Activated T-helper 1 cell treated with anti-CD3 and anti-CD28 coated beads, Interleukin-12 subunit alpha, Interleukin-12 subunit beta, Interleukin-2, Interleukin-4 antibody, amounts not matched to agents 30 ng/mL and 10 ng/mL and 1 ng/mL, durations not matched to agents 14 hours and 24 hours and 36 hours (primary cell): ENCODE measurements at regions of chr6 and their contacts with region 1.

Region 1: GRCh38 chr6:24520929-24521546 is 26.3 kb downstream of the ALDH5A1 start:
- DNase-seq: no peak
- H3K4me3 Mint-ChIP-seq: no peak overlapping the region
- H3K27ac Mint-ChIP-seq: no peak overlapping the region
- H3K4me1 Mint-ChIP-seq: peaks cover 20% of the 10 kb centered on the region
- H3K27me3 Mint-ChIP-seq: no peaks in the 10 kb centered on the region

Region 2: DNA sequence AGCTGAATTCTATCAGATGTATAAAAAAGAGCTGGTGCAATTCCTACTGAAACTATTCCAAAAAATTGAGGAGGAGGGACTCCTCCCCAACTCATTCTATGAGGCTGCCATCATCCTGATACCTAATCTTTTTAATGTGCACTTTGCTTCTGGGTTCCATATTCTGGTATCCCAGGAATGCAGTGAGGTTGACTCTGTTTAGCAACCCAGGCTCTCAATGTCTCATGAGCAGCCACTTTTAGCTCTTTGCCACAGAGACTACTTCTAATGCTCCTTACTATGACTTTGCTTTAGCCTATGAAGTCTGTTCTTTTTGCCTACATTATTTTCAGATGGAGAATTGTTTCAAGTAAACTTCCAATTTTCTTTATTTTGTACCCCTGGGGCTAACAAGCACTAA is 580.6 kb before region 1 on chr6:
- intact Hi-C with region 1: no loop called
- DNase-seq: no peak
- H3K4me3 Mint-ChIP-seq: no peak overlapping the region
- H3K27ac Mint-ChIP-seq: no peak overlapping the region
- H3K4me1 Mint-ChIP-seq: no peaks in the 10 kb centered on the region
- H3K27me3 Mint-ChIP-seq: no peaks in the 10 kb centered on the region

Region 3: DNA sequence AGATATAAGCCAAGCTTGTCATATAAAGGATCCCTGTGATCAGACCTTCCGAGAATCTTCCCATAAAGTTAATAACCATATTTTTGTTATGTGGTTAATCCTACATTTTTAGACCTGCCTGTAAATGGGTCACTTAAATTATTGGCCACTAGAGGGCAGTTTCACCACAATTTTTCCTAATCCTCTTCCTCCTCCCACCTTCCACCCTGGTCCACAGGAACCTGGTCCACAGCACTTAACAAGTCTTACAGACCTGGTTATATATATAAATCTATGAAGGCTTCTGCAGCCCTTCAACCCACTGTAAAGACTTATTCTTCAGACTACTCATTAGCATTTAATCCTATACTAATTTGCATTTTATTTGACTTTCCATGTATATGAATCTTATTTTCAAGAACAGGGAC is 90.0 kb before region 1 on chr6:
- intact Hi-C with region 1: loop called (anchors 1 kb)
- DNase-seq: no peak
- H3K4me3 Mint-ChIP-seq: no peak overlapping the region
- H3K27ac Mint-ChIP-seq: no peak overlapping the region
- H3K4me1 Mint-ChIP-seq: no peaks in the 10 kb centered on the region
- H3K27me3 Mint-ChIP-seq: no peaks in the 10 kb centered on the region

Region 4: DNA sequence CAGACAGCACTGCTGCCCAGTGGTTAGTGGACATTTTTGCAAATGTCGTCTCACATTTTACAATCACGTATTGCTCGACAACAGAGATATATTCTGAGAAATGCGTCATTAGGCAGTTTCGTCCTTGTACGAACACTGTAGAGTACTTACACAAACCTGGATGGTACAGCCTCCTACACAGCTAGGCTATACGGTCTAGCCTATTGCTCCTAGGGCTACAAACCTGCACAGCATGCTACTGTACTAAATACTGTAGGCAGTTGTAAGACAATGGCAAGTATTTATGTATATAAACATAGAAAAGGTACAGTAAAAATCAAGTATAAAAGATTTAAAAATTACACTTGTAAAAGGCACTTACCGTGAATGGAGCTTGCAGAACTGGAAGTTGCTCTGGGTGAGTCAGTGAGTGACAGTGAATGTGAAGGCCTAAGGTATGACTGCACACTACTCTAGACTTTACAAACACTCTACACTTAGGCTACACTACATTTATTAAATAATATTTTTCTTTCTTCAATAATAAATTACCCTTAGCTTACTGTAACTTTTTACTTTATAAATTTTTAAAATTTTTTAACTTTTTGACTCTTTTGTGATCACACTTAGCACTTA is 16.8 kb after region 1 on chr6:
- intact Hi-C with region 1: no loop called
- DNase-seq: no peak
- H3K4me3 Mint-ChIP-seq: no peak overlapping the region
- H3K27ac Mint-ChIP-seq: no peak overlapping the region
- H3K4me1 Mint-ChIP-seq: no peaks in the 10 kb centered on the region
- H3K27me3 Mint-ChIP-seq: no peaks in the 10 kb centered on the region

Region 5: DNA sequence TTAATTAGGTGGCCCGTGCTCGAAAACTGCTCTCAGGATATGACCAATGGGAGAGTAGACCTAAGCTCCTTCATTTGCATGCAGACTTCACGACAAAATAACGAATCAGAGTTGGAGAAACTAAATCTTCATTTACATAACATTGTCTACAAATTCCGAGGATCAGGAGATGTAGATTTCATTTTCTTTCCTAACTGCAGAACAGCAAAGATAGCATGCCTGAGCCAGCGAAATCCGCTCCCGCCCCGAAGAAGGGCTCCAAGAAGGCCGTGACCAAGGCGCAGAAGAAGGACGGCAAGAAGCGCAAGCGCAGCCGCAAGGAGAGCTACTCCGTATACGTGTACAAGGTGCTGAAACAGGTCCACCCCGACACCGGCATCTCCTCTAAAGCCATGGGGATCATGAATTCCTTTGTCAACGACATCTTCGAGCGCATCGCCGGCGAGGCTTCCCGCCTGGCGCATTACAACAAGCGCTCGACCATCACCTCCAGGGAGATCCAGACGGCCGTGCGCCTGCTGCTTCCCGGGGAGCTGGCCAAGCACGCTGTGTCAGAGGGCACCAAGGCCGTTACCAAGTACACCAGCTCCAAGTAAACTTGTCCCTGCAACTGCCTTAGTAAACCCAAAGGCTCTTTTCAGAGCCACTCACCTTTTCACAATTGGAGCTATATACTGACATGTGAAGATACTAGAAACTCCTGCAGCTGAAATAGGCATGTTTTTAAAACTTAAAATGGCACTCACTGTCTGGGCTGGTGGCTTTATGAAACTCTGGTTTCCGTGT is 1662.7 kb after region 1 on chr6:
- intact Hi-C with region 1: no loop called
- DNase-seq: peak; percentile 71
- H3K4me3 Mint-ChIP-seq: peak overlapping the region; percentile 86
- H3K27ac Mint-ChIP-seq: peak overlapping the region; percentile 97
- H3K4me1 Mint-ChIP-seq: peaks cover 58% of the 10 kb centered on the region
- H3K27me3 Mint-ChIP-seq: no peaks in the 10 kb centered on the region